Activated T-helper 1 cell treated with anti-CD3 and anti-CD28 coated beads, Interleukin-12 subunit alpha, Interleukin-12 subunit beta, Interleukin-2, Interleukin-4 antibody, amounts not matched to agents 30 ng/mL and 10 ng/mL and 1 ng/mL, durations not matched to agents 14 hours and 24 hours and 36 hours (primary cell): ENCODE measurements at regions of chr15 and their contacts with region 1.

Region 1: DNA sequence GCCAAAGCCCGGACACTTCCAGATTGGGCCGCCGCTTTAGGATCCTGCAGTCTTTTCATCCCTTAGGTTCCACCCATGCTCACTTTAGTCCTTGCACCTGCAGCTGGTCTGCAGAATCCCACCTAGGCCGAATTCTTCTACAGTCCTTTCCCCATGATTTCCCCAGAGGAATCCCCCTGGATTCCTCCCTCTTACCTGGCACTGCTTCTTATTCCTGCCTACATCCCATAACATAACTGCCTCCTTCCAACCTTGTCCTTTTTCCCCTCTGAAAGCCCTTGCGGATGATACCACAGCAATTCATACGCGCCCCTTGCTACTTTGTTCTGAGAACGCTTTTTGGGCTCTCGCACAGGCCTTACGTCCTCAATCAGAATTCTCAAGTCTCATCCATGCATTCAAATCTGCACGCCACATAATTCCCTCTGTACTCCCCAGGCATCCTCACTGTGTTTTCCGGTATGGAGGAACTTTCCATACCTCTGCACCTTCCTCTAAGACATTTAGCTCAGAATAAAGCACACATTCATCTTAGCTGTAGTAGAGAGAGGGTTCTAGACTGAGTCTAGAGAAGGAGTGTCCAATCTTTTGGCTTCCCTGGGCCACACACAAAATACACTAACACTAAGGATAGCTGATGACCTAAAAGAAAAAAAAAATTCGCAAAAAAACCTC is 619 bp downstream of the EIF2AK4 start:
- DNase-seq: no peak
- H3K4me3 Mint-ChIP-seq: peak overlapping the region; percentile 94
- H3K27ac Mint-ChIP-seq: peak overlapping the region; percentile 84
- H3K4me1 Mint-ChIP-seq: peaks cover 49% of the 10 kb centered on the region
- H3K27me3 Mint-ChIP-seq: no peaks in the 10 kb centered on the region

Region 2: DNA sequence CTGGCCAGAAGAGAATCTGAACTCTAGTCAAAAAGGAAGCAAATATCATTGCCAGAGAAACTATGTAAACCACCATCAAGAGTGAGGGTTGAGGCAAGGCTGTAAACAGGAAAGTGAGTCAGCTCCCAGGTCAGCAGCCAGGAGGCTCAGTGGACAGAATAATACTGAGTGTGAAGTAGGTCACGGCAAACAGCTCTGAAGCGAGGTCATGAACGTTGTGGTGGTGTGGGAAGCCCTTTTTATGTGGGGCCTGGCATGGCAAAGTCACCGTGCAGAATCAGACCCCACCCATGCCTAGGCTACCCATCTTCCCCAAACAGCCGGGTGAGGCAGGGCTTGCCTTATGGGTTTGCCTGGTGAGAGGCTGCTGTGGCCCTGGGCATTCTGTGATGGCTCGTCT is 309.7 kb before region 1 on chr15:
- intact Hi-C with region 1: loop called (anchors 5 kb)
- DNase-seq: peak; percentile 65
- H3K4me3 Mint-ChIP-seq: peak overlapping the region; percentile 71
- H3K27ac Mint-ChIP-seq: peak overlapping the region; percentile 98
- H3K4me1 Mint-ChIP-seq: peaks cover 81% of the 10 kb centered on the region
- H3K27me3 Mint-ChIP-seq: no peaks in the 10 kb centered on the region

Region 3: GRCh38 chr15:39908186-39908585 is 26.3 kb before region 1 on chr15:
- intact Hi-C with region 1: no loop called
- DNase-seq: no peak
- H3K4me3 Mint-ChIP-seq: no peak overlapping the region
- H3K27ac Mint-ChIP-seq: no peak overlapping the region
- H3K4me1 Mint-ChIP-seq: no peaks in the 10 kb centered on the region
- H3K27me3 Mint-ChIP-seq: peaks cover 9% of the 10 kb centered on the region

Region 4: GRCh38 chr15:39946862-39947261 is 12.3 kb after region 1 on chr15:
- intact Hi-C with region 1: loop called (anchors 1 kb)
- DNase-seq: no peak
- H3K4me3 Mint-ChIP-seq: no peak overlapping the region
- H3K27ac Mint-ChIP-seq: no peak overlapping the region
- H3K4me1 Mint-ChIP-seq: peaks cover 38% of the 10 kb centered on the region
- H3K27me3 Mint-ChIP-seq: no peaks in the 10 kb centered on the region

Region 5: DNA sequence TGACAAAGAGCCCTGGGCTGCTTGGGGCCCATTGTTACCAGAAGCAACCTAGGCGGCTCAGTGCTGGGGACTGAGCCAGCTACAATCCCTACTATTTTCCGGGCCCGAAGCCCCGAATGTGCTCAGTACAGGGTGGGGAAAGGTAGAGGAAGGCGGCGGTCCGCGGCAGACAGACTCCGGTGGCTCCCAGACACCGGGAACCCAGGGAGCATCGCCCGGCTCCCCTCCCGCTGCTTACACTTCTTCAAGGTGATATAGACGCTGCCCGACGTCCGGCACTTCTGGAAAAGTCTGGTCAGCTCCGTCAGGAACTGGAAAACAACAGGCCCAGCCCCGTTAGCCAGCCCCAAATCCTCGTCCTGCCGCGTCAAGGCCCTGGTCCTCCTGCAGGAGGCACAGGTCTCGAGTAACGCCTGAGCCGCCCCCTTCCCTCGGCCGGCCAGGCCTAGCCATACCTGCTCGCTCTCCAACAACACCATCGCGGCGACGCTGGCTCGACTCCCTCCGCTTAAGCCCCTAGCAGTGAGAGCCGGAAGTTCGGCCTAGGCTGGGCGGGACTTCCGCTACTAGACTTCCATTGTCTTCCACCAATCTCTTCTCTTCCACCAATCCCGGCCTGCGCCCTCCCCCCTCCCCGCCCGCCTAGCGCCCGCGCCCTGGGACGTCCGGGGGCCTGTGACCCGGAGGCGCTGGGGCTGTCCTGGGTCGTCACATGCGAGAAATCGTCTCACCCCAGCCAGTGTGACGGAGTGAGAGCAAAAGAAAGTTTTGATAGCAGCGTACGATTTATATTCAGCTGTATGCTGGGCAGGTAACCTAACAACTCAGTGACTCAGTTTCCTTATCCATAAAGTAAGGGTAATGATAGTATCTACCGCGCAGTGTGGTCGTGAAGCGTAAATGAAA is 104.4 kb after region 1 on chr15 and contains the start of gene SRP14:
- intact Hi-C with region 1: loop called (anchors 1 kb)
- DNase-seq: peak; percentile 88
- H3K4me3 Mint-ChIP-seq: peak within 1 kb of the TSS; percentile 100
- H3K27ac Mint-ChIP-seq: peak within 1 kb of the TSS; percentile 98
- H3K4me1 Mint-ChIP-seq: peaks cover 44% of the 10 kb centered on the region
- H3K27me3 Mint-ChIP-seq: no peaks in the 10 kb centered on the region
- total RNA-seq, gene SRP14: 144 and 147 TPM in 2 replicates